Left colon (tissue), 2 donors: ENCODE measurements at regions of chr1 and their contacts with region 1.

Region 1: GRCh38 chr1:207404849-207405525 is 49.1 kb upstream of the CR2 start:
- DNase-seq: no peak
- ATAC-seq: peak; percentile 87

Region 2: GRCh38 chr1:207084701-207085180 is 320.2 kb before region 1 on chr1:
- intact Hi-C with region 1: loop called in 1 of 2 experiments (anchors 1 kb)
- DNase-seq: no peak
- ATAC-seq: peak; percentile 45